ENCODE measurements at regions of chr3 and their contacts with region 1.

Region 1: GRCh38 chr3:129942296-129942695 is 32.2 kb upstream of the TRH start:
- H3K4me3 Mint-ChIP-seq: no peak overlapping the region
- H3K27ac Mint-ChIP-seq: no peak overlapping the region
- H3K4me1 Mint-ChIP-seq: peaks cover 20% of the 10 kb centered on the region
- H3K27me3 Mint-ChIP-seq: peaks cover 10% of the 10 kb centered on the region

Region 2: GRCh38 chr3:130093741-130094391 is 151.6 kb after region 1 on chr3:
- intact Hi-C with region 1: loop called (anchors 1 kb)
- H3K4me3 Mint-ChIP-seq: peak overlapping the region; percentile 55
- H3K27ac Mint-ChIP-seq: peak overlapping the region; percentile 66
- H3K4me1 Mint-ChIP-seq: peaks cover 43% of the 10 kb centered on the region
- H3K27me3 Mint-ChIP-seq: no peaks in the 10 kb centered on the region